SK-N-SH (cell line): ENCODE measurements at regions of chr11 and their contacts with region 1.

Region 1: GRCh38 chr11:124758317-124759203 is 3.5 kb downstream of the ESAM start:
- DNase-seq: peak; percentile 89
- H3K4me3 ChIP-seq: no peak overlapping the region; a peak in 2 of 4 replicates
- H3K27ac ChIP-seq: no peak overlapping the region
- H3K4me1 ChIP-seq: peaks cover 0 to 13% of the 10 kb centered on the region in 2 experiments; a peak in 2 of 4 replicates
- H3K27me3 ChIP-seq: no peaks in the 10 kb centered on the region
- CTCF ChIP-seq: peak; percentile 51
- EP300 ChIP-seq: no peak
- RAD21 ChIP-seq: peak; percentile 47

Region 2: GRCh38 chr11:124662106-124662505 is 96.5 kb before region 1 on chr11:
- CTCF ChIA-PET with region 1: interaction called, 14 read pairs
- POLR2A ChIA-PET with region 1: no interaction called
- DNase-seq: no peak
- H3K4me3 ChIP-seq: no peak overlapping the region
- H3K27ac ChIP-seq: no peak overlapping the region
- H3K4me1 ChIP-seq: peaks cover 0 to 5% of the 10 kb centered on the region in 2 experiments; a peak in 2 of 4 replicates
- H3K27me3 ChIP-seq: no peaks in the 10 kb centered on the region
- CTCF ChIP-seq: no peak
- EP300 ChIP-seq: no peak
- RAD21 ChIP-seq: no peak

Region 3: GRCh38 chr11:124739479-124740276 is 18.9 kb before region 1 on chr11 and contains the start of gene NRGN:
- CTCF ChIA-PET with region 1: interaction called, 28 read pairs
- POLR2A ChIA-PET with region 1: no interaction called
- DNase-seq: peak; percentile 98
- H3K4me3 ChIP-seq: peak within 1 kb of the TSS; percentile 55 to 69
- H3K27ac ChIP-seq: no peak within 1 kb of the TSS; a peak in 1 of 4 replicates
- H3K4me1 ChIP-seq: peaks cover 0 to 12% of the 10 kb centered on the region in 2 experiments; a peak in 2 of 4 replicates
- H3K27me3 ChIP-seq: no peaks in the 10 kb centered on the region
- CTCF ChIP-seq: no peak
- EP300 ChIP-seq: no peak
- RAD21 ChIP-seq: no peak
- polyA plus RNA-seq, gene NRGN: 3.1 and 6.8 TPM in 2 replicates

Region 4: GRCh38 chr11:124778281-124778680 is 19.7 kb after region 1 on chr11:
- CTCF ChIA-PET with region 1: interaction called, 60 read pairs
- POLR2A ChIA-PET with region 1: no interaction called
- DNase-seq: peak; percentile 16
- H3K4me3 ChIP-seq: no peak overlapping the region
- H3K27ac ChIP-seq: no peak overlapping the region
- H3K4me1 ChIP-seq: no peaks in the 10 kb centered on the region
- H3K27me3 ChIP-seq: no peaks in the 10 kb centered on the region
- CTCF ChIP-seq: peak; percentile 35
- EP300 ChIP-seq: no peak
- RAD21 ChIP-seq: no peak

Region 5: GRCh38 chr11:124793466-124794278 is 35.1 kb after region 1 on chr11:
- CTCF ChIA-PET with region 1: interaction called, 53 read pairs
- POLR2A ChIA-PET with region 1: interaction called, 3 read pairs
- DNase-seq: peak; percentile 52
- H3K4me3 ChIP-seq: no peak overlapping the region
- H3K27ac ChIP-seq: no peak overlapping the region
- H3K4me1 ChIP-seq: peaks cover 9 to 16% of the 10 kb centered on the region in 2 experiments; a peak in 3 of 4 replicates
- H3K27me3 ChIP-seq: no peaks in the 10 kb centered on the region
- CTCF ChIP-seq: peak; percentile 82
- EP300 ChIP-seq: no peak
- RAD21 ChIP-seq: peak; percentile 67

Region 6: GRCh38 chr11:124812876-124813275 is 54.3 kb after region 1 on chr11:
- CTCF ChIA-PET with region 1: interaction called, 10 read pairs
- POLR2A ChIA-PET with region 1: no interaction called
- DNase-seq: no peak
- H3K4me3 ChIP-seq: no peak overlapping the region
- H3K27ac ChIP-seq: no peak overlapping the region
- H3K4me1 ChIP-seq: no peaks in the 10 kb centered on the region
- H3K27me3 ChIP-seq: no peaks in the 10 kb centered on the region; the same call in 1 of the 2 replicates
- CTCF ChIP-seq: no peak
- EP300 ChIP-seq: no peak
- RAD21 ChIP-seq: no peak